Sciatic nerve (tissue), 2 donors: ENCODE measurements at regions of chr5 and their contacts with region 1.

Region 1: DNA sequence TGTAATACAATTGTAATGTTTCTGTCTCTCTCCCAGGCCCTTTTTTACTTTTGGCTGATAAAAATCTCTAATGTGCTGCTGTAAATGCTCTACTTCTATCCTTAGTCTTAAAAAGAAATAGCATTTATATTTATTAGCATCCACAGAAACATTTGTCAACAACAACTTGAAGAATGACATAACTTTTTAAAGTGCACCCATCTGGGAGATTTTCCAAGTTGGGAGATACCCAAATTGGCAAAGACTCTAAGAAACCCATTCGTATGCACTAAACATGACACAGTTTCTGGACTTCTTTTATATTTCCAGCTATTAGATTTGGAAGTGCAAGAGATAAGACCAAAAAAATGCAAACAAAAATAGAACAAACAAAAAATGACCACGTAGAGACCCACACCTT is 2287.4 kb upstream of the WWC1 start:
- DNase-seq: no peak
- ATAC-seq: no peak

Region 2: DNA sequence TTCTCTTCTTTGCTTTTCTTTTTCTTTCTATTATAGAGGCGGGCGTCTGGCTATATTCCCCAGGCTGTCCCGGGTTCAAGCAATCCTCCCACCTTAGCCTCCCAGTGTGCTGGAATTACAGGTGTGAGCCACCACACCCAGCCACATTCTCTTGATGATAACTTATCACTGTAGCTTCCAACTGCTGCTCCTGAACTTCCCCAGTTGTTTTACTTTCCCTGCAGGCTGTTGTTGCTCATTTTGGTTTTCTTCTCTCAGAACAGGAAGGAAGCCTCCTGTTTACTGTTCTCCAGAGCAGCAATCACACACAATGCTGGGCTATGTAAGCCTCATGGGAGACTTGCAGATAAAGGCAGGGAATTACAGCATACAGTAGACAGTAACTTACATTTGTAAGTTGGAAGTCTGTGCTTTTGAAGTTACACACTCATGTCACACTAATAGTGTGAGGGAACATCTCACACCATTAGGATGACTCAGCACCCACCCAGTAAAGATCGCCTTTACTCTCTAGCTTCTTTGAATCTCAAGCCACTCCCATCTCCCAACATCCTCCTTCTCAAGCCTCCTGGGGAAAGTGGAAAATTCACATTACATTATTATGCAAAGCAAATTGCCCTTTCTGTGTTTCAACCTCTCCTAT is 71.0 kb after region 1 on chr5:
- intact Hi-C with region 1: loop called (anchors 2 kb)
- DNase-seq: no peak
- ATAC-seq: no peak